Activated CD4-positive, alpha-beta memory T cell treated with anti-CD3 and anti-CD28 coated beads for 36 hours (primary cell): ENCODE measurements at regions of chr2 and their contacts with region 1.

Region 1: GRCh38 chr2:46909771-46910419 is 5.7 kb downstream of the MCFD2 start:
- DNase-seq: peak; percentile 69
- H3K4me3 Mint-ChIP-seq: no peak overlapping the region
- H3K27ac Mint-ChIP-seq: peak overlapping the region; percentile 2
- H3K4me1 Mint-ChIP-seq: peaks cover 43% of the 10 kb centered on the region
- H3K27me3 Mint-ChIP-seq: no peaks in the 10 kb centered on the region

Region 2: DNA sequence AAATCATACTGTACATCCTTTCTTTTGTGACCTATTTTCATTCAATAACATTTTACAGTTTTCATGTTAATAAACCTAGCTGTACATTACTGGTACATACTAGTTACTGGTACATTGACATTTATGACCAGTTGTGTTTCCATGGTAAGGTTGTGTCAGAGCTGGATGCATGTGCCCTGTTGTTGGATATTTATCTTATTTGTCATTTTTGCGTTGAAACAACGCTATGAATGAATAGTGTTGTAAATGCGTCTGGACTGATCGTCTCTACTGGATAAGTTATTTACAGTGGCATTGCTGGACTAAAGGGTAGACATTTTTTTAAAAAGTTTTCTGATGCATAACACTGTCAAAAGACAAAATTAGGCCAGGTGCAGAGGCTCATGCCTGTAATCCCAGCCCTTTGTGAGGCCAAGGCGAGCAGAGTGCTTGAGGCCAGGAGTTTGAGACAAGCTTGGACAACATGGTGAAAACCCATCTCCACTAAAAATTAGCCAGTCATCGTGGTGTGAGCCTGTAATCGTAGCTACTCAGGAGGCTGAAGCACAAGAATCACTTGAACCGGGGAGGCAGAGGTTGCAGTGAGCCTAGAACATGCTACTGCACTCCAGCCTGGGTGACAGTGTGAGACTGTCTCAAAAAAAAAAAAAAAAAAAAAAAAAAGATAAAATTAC is 34.5 kb before region 1 on chr2:
- CTCF ChIA-PET with region 1: no interaction called
- POLR2A ChIA-PET with region 1: no interaction called
- intact Hi-C with region 1: no loop called
- DNase-seq: no peak
- H3K4me3 Mint-ChIP-seq: no peak overlapping the region
- H3K27ac Mint-ChIP-seq: no peak overlapping the region
- H3K4me1 Mint-ChIP-seq: no peaks in the 10 kb centered on the region
- H3K27me3 Mint-ChIP-seq: peaks cover 15% of the 10 kb centered on the region

Region 3: DNA sequence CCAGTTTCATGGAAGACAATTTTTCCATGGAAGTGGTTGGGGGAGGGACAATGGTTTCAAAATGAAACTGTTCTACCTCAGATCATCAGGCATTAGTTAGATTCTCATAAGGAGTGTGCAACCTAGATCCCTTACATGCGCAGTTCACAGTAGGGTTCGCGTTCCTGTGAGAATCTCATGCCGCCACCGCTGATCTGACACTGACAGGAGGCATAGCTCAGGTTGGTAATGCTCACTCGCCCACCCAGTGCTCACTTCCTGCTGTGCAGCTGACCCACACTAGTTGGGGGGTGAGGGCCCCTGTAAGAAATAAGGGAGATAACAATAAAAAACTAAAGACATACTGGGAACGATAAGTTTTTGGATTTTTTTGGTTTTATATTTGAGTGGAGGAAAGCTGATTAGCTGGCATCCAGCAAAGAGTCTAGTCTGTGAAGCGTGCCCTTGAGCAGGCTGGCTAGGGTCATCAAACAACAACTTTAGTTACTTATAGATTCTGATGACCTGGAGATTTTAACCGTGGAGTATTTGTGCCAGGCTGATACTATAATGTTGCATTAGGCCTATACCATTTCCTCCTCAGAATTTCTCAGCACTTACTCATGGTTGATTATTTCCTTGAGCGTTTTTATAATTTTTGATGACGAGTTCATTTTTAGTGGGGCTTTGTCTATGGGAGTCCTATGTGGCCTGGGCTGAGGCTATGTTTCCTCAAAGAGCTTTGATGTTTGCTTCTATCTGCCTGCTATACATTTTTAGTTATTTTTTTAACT is 12.0 kb after region 1 on chr2:
- CTCF ChIA-PET with region 1: interaction called, 19 read pairs
- POLR2A ChIA-PET with region 1: no interaction called
- intact Hi-C with region 1: loop called (anchors 1 kb)
- DNase-seq: no peak
- H3K4me3 Mint-ChIP-seq: no peak overlapping the region
- H3K27ac Mint-ChIP-seq: no peak overlapping the region
- H3K4me1 Mint-ChIP-seq: peaks cover 41% of the 10 kb centered on the region
- H3K27me3 Mint-ChIP-seq: no peaks in the 10 kb centered on the region

Region 4: GRCh38 chr2:47029737-47030524 is 120.0 kb after region 1 on chr2:
- CTCF ChIA-PET with region 1: no interaction called
- POLR2A ChIA-PET with region 1: no interaction called
- intact Hi-C with region 1: no loop called
- DNase-seq: no peak
- H3K4me3 Mint-ChIP-seq: no peak overlapping the region
- H3K27ac Mint-ChIP-seq: no peak overlapping the region
- H3K4me1 Mint-ChIP-seq: no peaks in the 10 kb centered on the region
- H3K27me3 Mint-ChIP-seq: no peaks in the 10 kb centered on the region